Stomach (tissue), 19 donors: ENCODE measurements at regions of chr6 and their contacts with region 1.

Region 1: DNA sequence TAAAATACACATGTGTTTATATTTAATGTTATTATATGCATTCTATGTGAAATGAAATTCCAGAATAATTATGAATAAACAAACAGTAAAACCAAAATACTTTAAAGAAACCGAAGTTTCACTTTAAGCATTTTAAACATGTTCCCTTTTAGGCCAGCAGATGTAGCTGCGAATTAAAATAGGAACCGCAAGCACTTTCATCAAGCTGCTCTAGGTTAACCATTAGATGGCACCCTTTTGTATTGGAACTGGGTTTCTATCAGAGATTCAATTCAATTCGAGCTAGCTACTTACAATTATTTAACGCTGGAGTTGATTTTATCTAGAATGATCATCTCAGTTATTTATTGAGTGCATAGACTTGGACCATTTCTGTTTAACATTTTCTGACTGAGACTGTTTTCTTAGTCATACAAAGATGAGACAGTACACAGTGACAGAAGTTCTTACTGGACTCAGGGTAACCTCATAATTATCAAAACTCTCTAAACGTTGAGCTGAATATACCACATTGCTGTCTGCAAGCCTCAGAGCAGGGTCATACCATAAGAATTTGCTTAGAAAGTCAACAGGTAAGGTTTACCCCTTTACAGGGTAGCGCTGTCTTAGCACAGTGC is 8.5 kb downstream of the TMEM242 start:
- DNase-seq: peak in 1 of 2 donors; percentile 85
- H3K4me3 ChIP-seq: no peak overlapping the region
- H3K27ac ChIP-seq: peak overlapping the region in 2 of 5 donors; percentile 20 to 22
- H3K4me1 ChIP-seq: peaks cover 6 to 25% (median 14%) of the 10 kb centered on the region in 4 donors
- H3K27me3 ChIP-seq: no peaks in the 10 kb centered on the region
- CTCF ChIP-seq: peak in 5 of 7 experiments; percentile 60 to 87 (median 72)
- EP300 ChIP-seq: no peak
- POLR2A ChIP-seq: no peak

Region 2: DNA sequence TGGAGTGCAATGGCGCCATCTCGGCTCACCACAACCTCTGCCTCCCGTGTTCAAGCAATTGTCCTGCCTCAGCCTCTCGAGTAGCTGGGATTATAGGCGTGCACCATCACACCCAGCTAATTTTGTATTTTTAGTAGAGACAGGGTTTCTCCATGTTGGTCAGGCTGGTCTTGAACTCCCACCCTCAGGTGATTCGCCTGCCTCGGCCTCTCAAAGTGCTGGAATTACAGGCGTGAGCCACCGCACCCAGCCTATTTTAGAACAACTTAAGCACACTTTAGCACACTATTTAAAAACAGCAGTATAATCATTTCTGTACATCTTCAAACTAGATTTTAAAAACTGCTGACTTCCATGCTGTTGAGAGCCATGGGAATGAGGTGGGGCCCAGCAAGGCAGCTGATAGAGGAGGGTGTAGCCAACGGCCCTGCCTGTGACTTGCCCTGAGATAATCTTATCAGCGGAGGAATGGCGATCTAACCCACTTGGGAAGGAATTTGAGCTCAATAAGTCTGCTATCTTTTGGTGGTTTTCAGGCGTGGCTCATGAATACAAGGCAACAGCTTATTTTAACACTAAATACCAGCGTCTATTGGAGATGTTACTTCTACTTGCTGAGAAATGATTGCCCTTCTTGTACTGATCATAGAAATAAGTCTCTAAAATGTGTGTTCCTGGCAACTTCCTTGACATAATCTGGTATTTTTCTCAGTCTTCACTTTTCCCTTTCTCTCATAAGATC is 78.3 kb after region 1 on chr6:
- intact Hi-C with region 1: no loop called
- DNase-seq: peak; percentile 64 to 84
- H3K4me3 ChIP-seq: no peak overlapping the region
- H3K27ac ChIP-seq: peak overlapping the region; percentile 30 to 82 (median 59)
- H3K4me1 ChIP-seq: peaks cover 0 to 18% (median 8%) of the 10 kb centered on the region in 4 donors
- H3K27me3 ChIP-seq: no peaks in the 10 kb centered on the region
- CTCF ChIP-seq: no peak
- EP300 ChIP-seq: no peak
- POLR2A ChIP-seq: no peak

Region 3: GRCh38 chr6:157592525-157592924 is 277.7 kb after region 1 on chr6:
- intact Hi-C with region 1: loop called (anchors 5 kb)
- DNase-seq: no peak
- H3K4me3 ChIP-seq: peak overlapping the region in 1 of 4 donors; percentile 16
- H3K27ac ChIP-seq: no peak overlapping the region
- H3K4me1 ChIP-seq: peaks cover 6 to 20% (median 15%) of the 10 kb centered on the region in 4 donors
- H3K27me3 ChIP-seq: no peaks in the 10 kb centered on the region
- CTCF ChIP-seq: no peak
- EP300 ChIP-seq: no peak
- POLR2A ChIP-seq: no peak

Region 4: DNA sequence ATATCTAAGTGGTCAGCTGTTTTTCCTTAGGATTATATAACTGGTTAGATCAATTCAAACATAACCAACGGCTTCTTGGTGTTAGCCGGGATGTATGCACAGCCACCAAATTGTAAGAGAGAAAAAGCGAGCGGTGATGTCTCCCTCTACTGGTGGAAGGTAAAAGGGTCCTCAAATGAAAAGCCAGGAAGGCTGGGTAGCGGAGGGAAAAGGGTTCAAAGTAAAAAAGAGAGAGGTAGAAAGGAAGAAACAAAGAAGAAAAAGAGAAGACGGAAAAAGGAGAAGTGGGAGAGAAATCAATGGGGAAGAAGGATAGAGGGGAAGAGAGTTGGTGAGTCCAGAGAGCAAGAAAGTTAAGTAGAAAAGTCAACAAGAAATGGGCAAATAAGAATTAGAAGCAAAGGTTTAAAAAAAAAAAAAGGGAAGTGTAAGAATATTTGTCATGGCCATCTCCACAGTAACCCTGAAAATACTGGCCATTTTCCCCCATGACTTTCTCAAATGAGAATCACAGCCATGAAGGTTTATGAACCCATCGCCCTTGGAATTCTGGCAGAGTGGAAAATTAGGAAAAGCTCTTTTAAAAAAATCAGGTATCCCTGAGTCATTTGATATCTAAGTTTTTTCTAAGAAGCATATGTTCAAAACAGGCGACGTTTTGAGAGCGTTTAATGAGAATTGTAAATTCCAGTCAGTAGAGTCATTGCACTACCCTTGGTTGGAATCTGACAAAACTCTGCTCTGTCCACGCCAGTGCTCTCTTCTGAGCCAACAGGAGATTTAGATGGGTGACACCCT is 352.6 kb after region 1 on chr6:
- intact Hi-C with region 1: loop called (anchors 10 kb)
- DNase-seq: peak; percentile 64 to 87
- H3K4me3 ChIP-seq: no peak overlapping the region
- H3K27ac ChIP-seq: no peak overlapping the region
- H3K4me1 ChIP-seq: peaks cover 6 to 32% (median 11%) of the 10 kb centered on the region in 4 donors
- H3K27me3 ChIP-seq: no peaks in the 10 kb centered on the region
- CTCF ChIP-seq: peak in 5 of 7 experiments; percentile 68 to 86 (median 82)
- EP300 ChIP-seq: no peak
- POLR2A ChIP-seq: no peak